MCF 10A (cell line): ENCODE measurements at regions of chr2 and their contacts with region 1.

Region 1: GRCh38 chr2:28958689-28959088 is 22.4 kb upstream of the TOGARAM2 start:
- DNase-seq: peak; percentile 83
- H3K4me3 Mint-ChIP-seq: no peak overlapping the region
- H3K27ac Mint-ChIP-seq: no peak overlapping the region
- H3K4me1 Mint-ChIP-seq: peaks cover 13% of the 10 kb centered on the region
- H3K27me3 Mint-ChIP-seq: no peaks in the 10 kb centered on the region
- CTCF ChIP-seq: peak; percentile 56

Region 2: DNA sequence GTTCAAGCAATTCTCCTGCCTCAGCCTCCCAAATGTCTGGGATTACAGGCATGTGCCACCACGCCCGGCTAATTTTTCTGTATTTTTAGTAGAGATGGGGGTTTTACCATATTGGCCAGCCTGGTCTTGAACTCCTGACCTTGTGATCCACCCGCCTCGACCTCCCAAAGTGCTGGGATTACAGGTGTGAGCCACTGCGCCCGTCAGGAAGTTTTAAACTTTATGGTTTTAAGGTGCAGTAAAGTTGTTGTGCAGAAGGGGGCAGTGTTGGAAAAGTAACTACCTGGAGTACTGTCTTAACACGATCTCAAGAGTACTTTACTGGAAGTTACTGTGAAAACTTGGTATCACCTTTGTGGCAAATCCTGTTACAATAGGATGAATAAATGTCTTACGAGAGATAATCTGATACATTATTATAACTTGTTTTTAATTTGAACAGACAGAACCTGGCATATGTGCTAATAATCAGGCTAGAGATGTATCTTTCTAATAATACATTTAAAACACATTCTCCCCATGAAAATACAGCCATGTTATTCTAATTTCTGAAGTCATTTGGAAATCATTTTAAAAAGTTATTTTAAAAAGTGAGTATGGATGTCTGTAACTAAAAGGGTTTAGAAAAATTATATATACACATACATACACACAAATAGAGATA is 137.3 kb before region 1 on chr2:
- CTCF ChIA-PET with region 1: no interaction called
- POLR2A ChIA-PET with region 1: no interaction called
- intact Hi-C with region 1: loop called (anchors 10 kb)
- DNase-seq: peak; percentile 70
- H3K4me3 Mint-ChIP-seq: no peak overlapping the region
- H3K27ac Mint-ChIP-seq: no peak overlapping the region
- H3K4me1 Mint-ChIP-seq: no peaks in the 10 kb centered on the region
- H3K27me3 Mint-ChIP-seq: no peaks in the 10 kb centered on the region
- CTCF ChIP-seq: peak; percentile 59

Region 3: DNA sequence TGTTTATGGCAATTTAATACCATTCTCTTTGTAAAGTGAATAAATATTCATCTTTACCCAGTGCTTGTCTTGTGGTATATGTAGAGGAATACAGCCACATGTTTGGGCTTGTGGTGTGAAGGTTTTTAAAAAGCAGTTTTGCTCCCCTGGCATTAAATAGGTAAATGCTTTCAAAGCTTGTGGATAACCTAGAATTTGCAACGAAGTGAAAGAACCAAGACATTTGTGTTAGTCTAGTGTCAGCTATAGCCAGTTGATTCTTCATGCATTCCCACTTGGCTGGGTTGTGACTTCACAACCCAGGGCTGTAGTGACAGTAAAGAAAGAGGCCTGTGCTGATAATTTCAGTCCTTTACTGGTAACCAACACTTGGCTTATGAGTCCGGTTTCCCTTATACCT is 10.5 kb before region 1 on chr2:
- CTCF ChIA-PET with region 1: no interaction called
- POLR2A ChIA-PET with region 1: no interaction called
- intact Hi-C with region 1: no loop called
- DNase-seq: no peak
- H3K4me3 Mint-ChIP-seq: no peak overlapping the region
- H3K27ac Mint-ChIP-seq: peak overlapping the region; percentile 57
- H3K4me1 Mint-ChIP-seq: peaks cover 39% of the 10 kb centered on the region
- H3K27me3 Mint-ChIP-seq: no peaks in the 10 kb centered on the region
- CTCF ChIP-seq: no peak

Region 4: GRCh38 chr2:29063646-29064343 is 105.1 kb after region 1 on chr2:
- CTCF ChIA-PET with region 1: interaction called, 3 read pairs
- POLR2A ChIA-PET with region 1: no interaction called
- intact Hi-C with region 1: loop called (anchors 5 kb)
- DNase-seq: peak; percentile 47
- H3K4me3 Mint-ChIP-seq: peak overlapping the region; percentile 55
- H3K27ac Mint-ChIP-seq: peak overlapping the region; percentile 54
- H3K4me1 Mint-ChIP-seq: peaks cover 49% of the 10 kb centered on the region
- H3K27me3 Mint-ChIP-seq: no peaks in the 10 kb centered on the region
- CTCF ChIP-seq: no peak

Region 5: GRCh38 chr2:29196792-29197788 is 238.4 kb after region 1 on chr2:
- CTCF ChIA-PET with region 1: interaction called, 6 read pairs
- POLR2A ChIA-PET with region 1: no interaction called
- intact Hi-C with region 1: loop called (anchors 1 kb)
- DNase-seq: peak; percentile 77
- H3K4me3 Mint-ChIP-seq: no peak overlapping the region
- H3K27ac Mint-ChIP-seq: no peak overlapping the region
- H3K4me1 Mint-ChIP-seq: peaks cover 11% of the 10 kb centered on the region
- H3K27me3 Mint-ChIP-seq: no peaks in the 10 kb centered on the region
- CTCF ChIP-seq: peak; percentile 84

Region 6: DNA sequence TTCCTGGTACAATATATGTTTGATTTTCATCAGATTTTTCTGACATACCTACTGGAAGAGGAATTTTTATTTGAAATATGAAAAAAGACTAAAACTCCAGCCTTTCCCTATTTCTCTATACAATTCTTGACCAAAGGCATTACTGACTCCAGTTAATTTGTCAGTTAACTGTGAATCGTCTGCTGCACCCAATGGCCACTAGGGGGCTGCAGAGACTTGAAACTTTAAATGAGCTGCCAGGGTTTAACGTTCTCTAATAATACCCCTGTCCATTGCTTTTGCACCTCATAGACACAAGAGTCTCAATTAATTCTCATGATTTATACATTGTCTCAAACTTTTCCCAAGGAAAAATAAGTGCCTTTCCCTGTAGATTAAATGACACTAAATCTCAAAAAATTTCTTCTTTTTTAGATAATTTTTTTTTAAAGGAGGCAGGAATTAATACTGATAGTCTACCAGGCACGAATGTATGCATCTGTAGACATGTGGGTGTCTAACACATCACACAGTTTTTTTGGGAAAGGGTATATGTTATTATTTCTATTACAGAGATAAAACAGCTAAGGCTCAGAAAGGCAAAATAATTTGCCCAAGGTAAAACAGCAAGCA is 964.5 kb after region 1 on chr2:
- CTCF ChIA-PET with region 1: interaction called, 4 read pairs
- POLR2A ChIA-PET with region 1: no interaction called
- intact Hi-C with region 1: loop called (anchors 1 kb)
- DNase-seq: peak; percentile 83
- H3K4me3 Mint-ChIP-seq: no peak overlapping the region
- H3K27ac Mint-ChIP-seq: no peak overlapping the region
- H3K4me1 Mint-ChIP-seq: no peaks in the 10 kb centered on the region
- H3K27me3 Mint-ChIP-seq: peaks cover 42% of the 10 kb centered on the region
- CTCF ChIP-seq: peak; percentile 86

Region 7: DNA sequence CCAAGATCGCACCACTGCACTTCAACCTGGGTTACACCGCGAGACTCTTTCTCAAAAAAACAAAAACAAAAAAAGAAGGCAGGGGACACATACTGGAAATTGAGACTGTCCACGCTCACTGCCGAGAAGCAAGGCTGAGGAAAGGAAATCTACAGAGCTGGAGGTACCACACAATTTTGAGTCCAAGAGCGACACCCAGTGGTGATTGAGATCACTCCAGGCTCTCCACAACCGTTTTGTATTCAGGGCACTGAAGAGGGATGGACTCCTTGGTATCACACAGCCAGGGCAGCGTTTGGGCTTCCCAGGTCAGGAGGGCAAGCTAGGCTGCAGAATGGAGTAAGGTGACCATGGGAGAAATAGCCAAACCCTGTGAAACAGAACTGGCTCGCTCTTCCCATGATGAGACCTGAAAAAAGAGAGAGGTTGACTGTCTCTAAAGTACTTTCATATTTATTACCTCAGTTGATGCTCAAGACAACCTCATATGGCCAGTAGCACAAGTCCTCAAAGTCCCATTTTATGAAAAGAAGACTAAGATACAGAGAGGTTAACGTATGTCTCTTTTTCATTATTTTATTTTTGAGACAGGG is 1113.7 kb after region 1 on chr2:
- CTCF ChIA-PET with region 1: interaction called, 3 read pairs
- POLR2A ChIA-PET with region 1: no interaction called
- intact Hi-C with region 1: loop called (anchors 2 kb)
- DNase-seq: peak; percentile 85
- H3K4me3 Mint-ChIP-seq: no peak overlapping the region
- H3K27ac Mint-ChIP-seq: no peak overlapping the region
- H3K4me1 Mint-ChIP-seq: no peaks in the 10 kb centered on the region
- H3K27me3 Mint-ChIP-seq: peaks cover 65% of the 10 kb centered on the region
- CTCF ChIP-seq: peak; percentile 74